Activated CD4-positive, alpha-beta T cell treated with anti-CD3 and anti-CD28 coated beads for 36 hours (primary cell): ENCODE measurements at regions of chr6 and their contacts with region 1.

Region 1: DNA sequence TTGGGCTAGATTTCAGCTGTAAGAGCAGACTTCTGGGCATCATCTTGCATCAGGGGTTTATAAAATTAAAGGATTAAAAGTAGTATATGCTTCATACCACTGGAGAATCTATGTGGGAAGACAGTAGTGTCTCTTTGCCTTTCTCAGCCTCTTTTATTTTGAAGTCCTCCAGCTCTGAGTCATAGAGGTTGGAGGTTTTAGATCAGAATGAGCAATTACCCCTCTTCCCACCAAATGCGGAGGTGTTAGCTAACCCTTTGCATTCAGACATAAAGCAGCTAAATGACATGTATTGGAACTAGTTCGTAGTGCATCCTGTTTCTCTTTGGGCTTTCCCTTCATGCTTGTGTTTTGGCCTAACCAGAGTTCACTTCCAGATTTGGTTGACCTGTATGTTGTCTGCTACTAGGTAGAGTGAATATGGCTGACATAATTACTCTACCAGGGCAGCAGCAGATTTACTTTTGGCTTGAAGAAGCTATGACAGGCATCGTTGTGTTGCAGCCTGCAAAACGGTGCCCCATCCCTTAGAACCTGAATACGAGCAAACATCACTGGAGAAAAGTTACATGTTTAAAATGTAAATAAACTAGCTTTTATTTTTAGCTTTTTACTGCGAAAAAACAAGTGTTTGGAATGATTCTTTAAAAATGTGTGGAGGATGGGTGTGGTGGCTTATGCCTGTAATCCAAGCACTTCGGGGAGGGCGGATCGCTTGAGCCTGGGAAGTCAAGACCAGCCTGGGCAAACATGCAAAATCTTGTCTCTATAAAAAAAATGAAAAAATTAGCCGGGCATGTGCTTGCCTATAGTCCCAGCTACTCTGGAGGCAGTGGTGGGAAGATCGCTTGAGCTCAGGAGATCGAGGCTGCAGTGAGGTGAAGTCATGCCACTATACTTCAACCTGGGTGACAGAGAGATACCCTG is 82.2 kb downstream of the MYO6 start:
- DNase-seq: peak; percentile 47
- ATAC-seq: peak; percentile 93
- H3K4me3 Mint-ChIP-seq: no peak overlapping the region
- H3K27ac Mint-ChIP-seq: no peak overlapping the region
- H3K4me1 Mint-ChIP-seq: peaks cover 8% of the 10 kb centered on the region
- H3K27me3 Mint-ChIP-seq: peaks cover 2% of the 10 kb centered on the region

Region 2: DNA sequence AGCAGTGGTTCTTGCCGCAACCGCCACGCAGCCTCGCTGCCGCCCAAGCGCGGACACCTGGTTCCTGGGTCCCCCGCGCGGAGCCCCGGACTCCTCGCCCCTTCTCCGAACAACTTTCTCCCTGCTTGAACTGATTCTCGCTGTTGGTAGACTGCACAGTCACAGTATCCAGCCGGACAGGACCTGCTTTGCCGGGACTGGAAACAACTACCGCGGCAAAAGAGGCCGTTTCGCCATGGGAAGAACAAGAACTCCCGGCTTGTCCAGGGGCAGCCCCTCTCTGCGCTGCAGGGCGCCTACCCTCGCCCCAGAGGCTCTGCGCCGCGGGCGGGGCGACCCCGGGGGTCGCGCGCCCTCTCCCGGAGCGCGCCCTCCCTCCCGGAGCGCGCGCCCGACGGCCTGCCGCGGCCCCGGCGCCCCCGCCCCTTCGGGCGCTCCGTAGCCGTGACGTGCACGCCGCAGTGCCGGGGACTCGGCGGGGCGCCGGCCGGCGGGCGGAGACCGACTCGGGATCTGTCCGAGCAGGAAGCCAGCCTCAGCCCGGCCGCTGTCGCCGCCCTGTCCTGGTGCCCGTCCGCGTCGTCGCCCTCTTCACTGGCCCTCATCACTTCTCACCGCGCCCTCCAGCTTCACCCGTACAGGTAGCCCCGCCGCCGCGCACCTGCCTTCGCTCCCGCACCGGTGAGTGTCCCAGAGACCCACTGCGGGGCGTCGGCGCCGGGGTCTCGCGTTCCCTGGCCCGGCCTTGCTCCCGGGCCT is 82.3 kb before region 1 on chr6 and contains the start of gene MYO6:
- CTCF ChIA-PET with region 1: no interaction called
- POLR2A ChIA-PET with region 1: no interaction called
- intact Hi-C with region 1: loop called in 1 of 2 experiments (anchors 2 kb)
- DNase-seq: peak; percentile 55
- ATAC-seq: peak; percentile 84
- H3K4me3 Mint-ChIP-seq: peak within 1 kb of the TSS; percentile 73
- H3K27ac Mint-ChIP-seq: peak within 1 kb of the TSS; percentile 53
- H3K4me1 Mint-ChIP-seq: peaks cover 6% of the 10 kb centered on the region
- H3K27me3 Mint-ChIP-seq: peaks cover 41% of the 10 kb centered on the region
- total RNA-seq, gene MYO6: 1.1 to 1.3 TPM

Region 3: DNA sequence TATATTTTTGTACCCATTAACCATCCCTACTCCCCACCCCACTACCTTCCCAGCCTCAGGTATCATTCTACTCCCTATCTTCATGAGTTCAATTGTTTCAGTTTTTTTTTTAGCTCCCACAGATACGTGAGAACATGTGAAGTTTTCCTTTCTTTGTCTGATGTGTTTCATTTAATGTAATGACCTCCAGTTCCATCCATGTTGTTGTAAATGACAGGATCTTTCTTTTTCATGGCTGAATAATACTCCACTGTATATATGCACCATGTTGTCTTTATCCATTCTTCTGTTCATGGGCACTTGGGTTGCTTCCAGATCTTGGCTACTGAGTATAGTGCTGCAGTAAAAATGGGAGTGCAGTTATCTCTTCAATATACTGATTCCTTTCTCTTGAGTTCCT is 18.7 kb before region 1 on chr6:
- CTCF ChIA-PET with region 1: interaction called, 3 read pairs
- POLR2A ChIA-PET with region 1: interaction called, 3 read pairs
- intact Hi-C with region 1: loop called in 1 of 2 experiments (anchors 1 kb)
- DNase-seq: no peak
- ATAC-seq: no peak
- H3K4me3 Mint-ChIP-seq: no peak overlapping the region
- H3K27ac Mint-ChIP-seq: no peak overlapping the region
- H3K4me1 Mint-ChIP-seq: no peaks in the 10 kb centered on the region
- H3K27me3 Mint-ChIP-seq: peaks cover 2% of the 10 kb centered on the region